GM12878 (cell line): ENCODE measurements at regions of chr1 and their contacts with region 1.

Region 1: DNA sequence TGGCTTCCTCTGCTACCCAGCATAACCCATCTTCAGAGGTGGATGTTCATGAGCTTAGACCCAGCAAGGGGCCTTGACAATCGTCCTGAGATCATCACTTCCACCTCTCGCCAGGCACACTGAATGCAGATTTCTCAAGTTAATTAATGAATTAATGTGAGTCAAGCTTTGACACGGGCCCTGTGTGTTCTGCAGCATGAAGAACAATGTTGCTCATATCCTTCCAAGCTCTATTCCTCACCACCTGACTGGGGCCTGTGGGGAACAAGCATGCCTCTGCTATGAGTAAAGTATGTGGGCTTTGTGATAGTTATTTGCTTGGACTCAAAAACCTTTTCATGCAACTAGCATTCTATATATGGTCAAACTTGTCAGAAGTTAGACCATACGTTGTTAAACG is 122.0 kb downstream of the SEC16B start:
- DNase-seq: no peak
- ATAC-seq: no peak
- H3K4me3 ChIP-seq: no peak overlapping the region
- H3K27ac ChIP-seq: no peak overlapping the region
- H3K4me1 ChIP-seq: no peaks in the 10 kb centered on the region
- H3K27me3 ChIP-seq: no peaks in the 10 kb centered on the region
- CTCF ChIP-seq: no peak
- EP300 ChIP-seq: no peak
- POLR2A ChIP-seq: no peak
- RAD21 ChIP-seq: no peak

Region 2: DNA sequence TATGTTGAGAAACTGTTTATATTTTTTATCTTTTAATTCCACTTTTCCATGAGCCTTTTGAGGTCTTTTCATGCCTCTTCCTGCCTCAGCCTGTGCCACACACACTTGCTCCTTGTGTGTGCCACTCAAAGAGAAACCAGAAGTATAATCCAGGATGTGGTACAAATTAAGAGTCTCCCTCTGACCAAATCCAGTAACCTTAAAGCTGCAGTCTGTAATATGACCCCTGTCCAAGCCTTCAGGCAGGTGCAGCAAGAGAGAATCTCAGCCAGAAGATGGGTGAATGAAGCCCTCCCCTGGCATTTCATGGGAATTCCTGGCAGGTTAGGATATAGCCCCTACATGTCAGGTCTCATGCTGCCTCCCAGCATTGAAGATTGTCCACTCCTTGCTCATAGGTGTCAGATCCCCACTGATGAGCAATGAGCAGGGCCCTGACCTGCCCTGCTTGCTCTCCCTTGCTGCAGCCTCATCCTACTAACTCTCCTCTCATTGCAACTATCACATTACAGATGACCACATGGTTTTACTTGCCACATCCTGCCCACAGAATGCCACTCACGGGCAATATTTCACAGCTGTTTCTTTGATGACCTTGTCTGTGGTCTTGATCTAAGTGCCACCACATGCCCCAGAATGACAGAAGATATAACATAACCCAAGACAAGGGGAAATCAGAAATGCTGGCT is 47.3 kb before region 1 on chr1:
- CTCF ChIA-PET with region 1: no interaction called
- POLR2A ChIA-PET with region 1: interaction called, 10 read pairs
- RAD21 ChIA-PET with region 1: interaction called, 7 read pairs
- SMC1A ChIA-PET with region 1: interaction called, 21 read pairs
- in situ Hi-C with region 1: no loop called
- intact Hi-C with region 1: no loop called
- DNase-seq: peak; percentile 62
- ATAC-seq: peak; percentile 88
- H3K4me3 ChIP-seq: no peak overlapping the region
- H3K27ac ChIP-seq: no peak overlapping the region
- H3K4me1 ChIP-seq: peaks cover 4% of the 10 kb centered on the region; the same call in 1 of the 2 replicates
- H3K27me3 ChIP-seq: no peaks in the 10 kb centered on the region
- CTCF ChIP-seq: no peak
- EP300 ChIP-seq: no peak
- POLR2A ChIP-seq: no peak
- RAD21 ChIP-seq: no peak

Region 3: DNA sequence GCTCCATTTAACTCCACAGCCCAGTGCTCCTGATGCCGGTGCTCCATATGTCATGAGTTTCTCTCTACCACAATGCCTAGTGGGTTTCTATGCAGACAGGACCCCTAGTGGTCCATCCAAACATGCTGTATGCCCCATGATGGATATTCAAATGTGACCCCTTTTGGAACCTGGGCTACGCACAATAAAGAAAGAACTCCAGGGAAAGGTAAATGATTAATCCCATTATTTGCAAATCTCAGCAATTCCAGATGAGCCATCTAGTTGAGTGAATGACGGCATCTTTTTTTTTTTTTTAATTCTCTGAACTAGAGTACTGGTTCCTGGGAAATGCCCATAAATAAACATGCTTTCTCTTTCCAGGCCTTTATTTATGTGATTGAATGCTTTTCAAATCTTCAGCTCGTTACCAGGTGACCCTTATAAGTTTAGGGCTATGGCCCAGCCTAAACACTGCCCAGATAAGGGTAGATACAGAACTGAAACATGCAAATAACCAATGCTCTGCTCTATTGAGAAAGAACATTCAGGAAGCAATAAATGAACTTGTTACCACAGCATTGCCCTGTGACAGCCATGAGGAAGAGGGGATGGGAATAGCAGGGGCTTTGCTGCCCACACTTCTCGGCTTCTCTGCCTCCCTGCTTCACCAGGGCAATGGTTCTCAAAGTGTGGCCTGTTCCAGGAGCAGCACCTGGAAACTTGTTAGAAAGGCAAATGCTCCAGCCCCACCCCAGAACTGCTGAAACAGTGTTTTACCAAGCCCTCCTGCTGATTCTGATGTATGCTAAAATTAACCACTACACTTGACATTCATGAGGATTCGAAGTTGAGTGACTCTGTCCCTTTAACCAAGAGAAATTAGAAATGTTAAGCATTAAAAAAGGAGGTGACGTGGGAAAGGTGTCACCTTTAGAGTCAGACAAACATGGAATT is 29.6 kb before region 1 on chr1:
- CTCF ChIA-PET with region 1: no interaction called
- POLR2A ChIA-PET with region 1: interaction called, 4 read pairs
- RAD21 ChIA-PET with region 1: interaction called, 22 read pairs
- SMC1A ChIA-PET with region 1: interaction called, 107 read pairs
- in situ Hi-C with region 1: no loop called
- intact Hi-C with region 1: no loop called
- DNase-seq: peak; percentile 40
- ATAC-seq: peak; percentile 96
- H3K4me3 ChIP-seq: no peak overlapping the region
- H3K27ac ChIP-seq: no peak overlapping the region
- H3K4me1 ChIP-seq: peaks cover 5% of the 10 kb centered on the region; the same call in 1 of the 2 replicates
- H3K27me3 ChIP-seq: no peaks in the 10 kb centered on the region
- CTCF ChIP-seq: no peak
- EP300 ChIP-seq: peak in 1 of 2 experiments; percentile 25; a peak in 1 of 4 replicates
- POLR2A ChIP-seq: no peak
- RAD21 ChIP-seq: no peak

Region 4: GRCh38 chr1:177824508-177824982 is 23.3 kb before region 1 on chr1:
- CTCF ChIA-PET with region 1: no interaction called
- POLR2A ChIA-PET with region 1: interaction called, 4 read pairs
- RAD21 ChIA-PET with region 1: interaction called, 22 read pairs
- SMC1A ChIA-PET with region 1: interaction called, 107 read pairs
- in situ Hi-C with region 1: no loop called
- intact Hi-C with region 1: no loop called
- DNase-seq: no peak
- ATAC-seq: peak; percentile 65
- H3K4me3 ChIP-seq: no peak overlapping the region
- H3K27ac ChIP-seq: no peak overlapping the region
- H3K4me1 ChIP-seq: no peaks in the 10 kb centered on the region
- H3K27me3 ChIP-seq: no peaks in the 10 kb centered on the region
- CTCF ChIP-seq: no peak
- EP300 ChIP-seq: no peak
- POLR2A ChIP-seq: no peak
- RAD21 ChIP-seq: no peak

Region 5: DNA sequence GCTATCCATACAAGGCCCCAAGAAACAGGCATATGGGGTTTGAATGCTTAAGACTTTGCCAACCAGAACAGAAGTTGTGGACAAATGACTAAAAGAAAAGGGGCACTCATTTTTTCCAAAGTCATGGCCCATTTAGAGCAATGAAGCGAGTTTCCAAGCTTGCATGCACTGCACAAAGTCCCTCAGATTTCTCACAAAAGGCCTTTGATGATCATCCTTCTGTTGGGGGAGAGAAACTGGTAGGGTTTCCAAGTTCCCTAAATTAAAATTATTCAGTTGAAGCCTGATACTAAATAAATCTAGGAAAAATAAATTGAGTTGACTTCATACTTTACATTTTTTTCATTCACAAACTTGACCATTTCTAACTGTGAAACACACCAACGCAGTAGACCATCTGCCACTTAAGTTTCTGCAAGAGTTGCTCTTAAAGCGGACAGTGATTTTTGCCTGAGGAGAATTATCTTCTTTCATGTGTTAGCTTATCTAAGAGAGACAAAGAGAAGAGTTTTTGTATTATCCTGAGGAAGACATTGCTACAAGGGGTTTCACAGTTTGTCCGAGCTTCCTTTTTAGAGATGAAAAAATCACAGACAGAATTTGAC is 17.2 kb before region 1 on chr1:
- CTCF ChIA-PET with region 1: interaction called, 5 read pairs
- POLR2A ChIA-PET with region 1: no interaction called
- RAD21 ChIA-PET with region 1: interaction called, 22 read pairs
- SMC1A ChIA-PET with region 1: interaction called, 107 read pairs
- in situ Hi-C with region 1: no loop called
- intact Hi-C with region 1: no loop called
- DNase-seq: no peak
- ATAC-seq: no peak
- H3K4me3 ChIP-seq: no peak overlapping the region
- H3K27ac ChIP-seq: no peak overlapping the region
- H3K4me1 ChIP-seq: no peaks in the 10 kb centered on the region
- H3K27me3 ChIP-seq: no peaks in the 10 kb centered on the region
- CTCF ChIP-seq: no peak
- EP300 ChIP-seq: no peak
- POLR2A ChIP-seq: no peak
- RAD21 ChIP-seq: no peak

Region 6: GRCh38 chr1:177858332-177858821 is 10.5 kb after region 1 on chr1:
- CTCF ChIA-PET with region 1: no interaction called
- POLR2A ChIA-PET with region 1: interaction called, 6 read pairs
- RAD21 ChIA-PET with region 1: interaction called, 30 read pairs
- SMC1A ChIA-PET with region 1: interaction called, 24 read pairs
- in situ Hi-C with region 1: no loop called
- intact Hi-C with region 1: no loop called
- DNase-seq: no peak
- ATAC-seq: peak; percentile 55
- H3K4me3 ChIP-seq: no peak overlapping the region
- H3K27ac ChIP-seq: no peak overlapping the region
- H3K4me1 ChIP-seq: no peaks in the 10 kb centered on the region
- H3K27me3 ChIP-seq: no peaks in the 10 kb centered on the region
- CTCF ChIP-seq: no peak
- EP300 ChIP-seq: no peak
- POLR2A ChIP-seq: no peak
- RAD21 ChIP-seq: no peak

Region 7: GRCh38 chr1:177913762-177914540 is 66.1 kb after region 1 on chr1:
- CTCF ChIA-PET with region 1: interaction called, 4 read pairs
- POLR2A ChIA-PET with region 1: no interaction called
- RAD21 ChIA-PET with region 1: interaction called, 3 read pairs
- SMC1A ChIA-PET with region 1: interaction called, 10 read pairs
- in situ Hi-C with region 1: no loop called
- intact Hi-C with region 1: no loop called
- DNase-seq: no peak
- ATAC-seq: peak; percentile 58
- H3K4me3 ChIP-seq: no peak overlapping the region
- H3K27ac ChIP-seq: no peak overlapping the region
- H3K4me1 ChIP-seq: no peaks in the 10 kb centered on the region
- H3K27me3 ChIP-seq: no peaks in the 10 kb centered on the region; a peak in 1 of 4 replicates
- CTCF ChIP-seq: peak; percentile 22 to 31 (median 27); a peak in 3 of 6 replicates
- EP300 ChIP-seq: no peak
- POLR2A ChIP-seq: no peak
- RAD21 ChIP-seq: 0 out of 2 replicates have a peak, but pooled peaks have one; percentile 6